ENCODE measurements at regions of chr2 and their contacts with region 1.

Region 1: GRCh38 chr2:71503837-71504236 is 50.5 kb downstream of the DYSF start:
- DNase-seq: peak in 2 of 5 donors; percentile 28 to 45
- H3K4me3 ChIP-seq: no peak overlapping the region
- H3K27ac ChIP-seq: peak overlapping the region; percentile 49 to 63
- H3K4me1 ChIP-seq: peaks cover 0 to 5% (median 0%) of the 10 kb centered on the region in 3 donors
- H3K27me3 ChIP-seq: no peaks in the 10 kb centered on the region
- CTCF ChIP-seq: no peak

Region 2: GRCh38 chr2:71299507-71299906 is 204.3 kb before region 1 on chr2:
- intact Hi-C with region 1: loop called (anchors 5 kb)
- DNase-seq: peak in 2 of 5 donors; percentile 57 to 68
- H3K4me3 ChIP-seq: no peak overlapping the region
- H3K27ac ChIP-seq: no peak overlapping the region
- H3K4me1 ChIP-seq: no peaks in the 10 kb centered on the region
- H3K27me3 ChIP-seq: no peaks in the 10 kb centered on the region
- CTCF ChIP-seq: peak; percentile 59

Region 3: GRCh38 chr2:71578767-71579342 is 75.0 kb after region 1 on chr2:
- intact Hi-C with region 1: no loop called
- DNase-seq: no peak
- H3K4me3 ChIP-seq: no peak overlapping the region
- H3K27ac ChIP-seq: no peak overlapping the region
- H3K4me1 ChIP-seq: no peaks in the 10 kb centered on the region
- H3K27me3 ChIP-seq: no peaks in the 10 kb centered on the region
- CTCF ChIP-seq: no peak

Region 4: DNA sequence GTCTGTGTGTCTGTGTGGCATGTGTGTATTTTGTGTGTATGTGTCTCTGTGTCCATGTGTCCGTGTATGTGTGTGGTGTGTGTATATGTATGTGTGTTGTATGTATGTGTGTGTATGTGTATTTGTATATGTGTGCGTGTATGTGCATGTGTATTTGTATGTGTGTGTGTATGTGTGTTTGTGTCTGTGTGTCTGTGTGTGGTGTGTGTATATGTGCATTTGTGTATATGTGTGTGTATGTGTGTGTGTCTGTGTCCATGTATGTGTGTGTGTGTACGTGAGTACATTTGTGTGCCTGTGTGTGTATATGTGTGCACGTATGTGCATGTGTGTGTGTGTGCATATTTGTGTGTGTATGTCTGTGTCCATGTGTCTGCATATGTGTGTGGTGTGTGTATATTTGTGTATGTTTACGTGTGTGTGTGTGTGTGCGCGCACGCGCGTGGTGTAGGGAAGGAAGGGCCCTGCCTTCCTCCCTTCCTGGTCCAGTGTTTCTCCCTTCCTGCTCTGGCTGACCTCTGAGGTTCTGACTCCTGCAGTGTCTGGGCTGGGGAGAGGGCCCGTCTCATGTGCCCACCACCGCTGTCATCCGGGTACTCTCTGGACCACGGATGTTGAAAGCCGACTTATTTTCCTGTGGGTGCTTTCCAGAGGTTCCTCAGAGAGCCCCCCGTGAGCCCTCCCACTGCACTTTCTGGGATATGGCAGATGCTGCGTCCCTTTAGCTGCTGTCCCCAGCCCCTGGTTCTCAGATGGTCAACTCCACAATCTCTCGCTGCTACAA is 159.0 kb after region 1 on chr2:
- intact Hi-C with region 1: no loop called
- DNase-seq: peak in 1 of 5 donors; percentile 19
- H3K4me3 ChIP-seq: no peak overlapping the region
- H3K27ac ChIP-seq: no peak overlapping the region
- H3K4me1 ChIP-seq: no peaks in the 10 kb centered on the region
- H3K27me3 ChIP-seq: no peaks in the 10 kb centered on the region
- CTCF ChIP-seq: no peak

Measured in kidney (tissue), 22 donors.